Activated T-helper 2 cell treated with anti-CD3 and anti-CD28 coated beads, Interferon-gamma antibody, Interleukin-2, Interleukin-4, amounts not matched to agents 10 μg/mL and 5 μg/mL and 100 μg/mL, durations not matched to agents 14 hours and 24 hours and 36 hours (primary cell): ENCODE measurements at regions of chr13 and their contacts with region 1.

Region 1: DNA sequence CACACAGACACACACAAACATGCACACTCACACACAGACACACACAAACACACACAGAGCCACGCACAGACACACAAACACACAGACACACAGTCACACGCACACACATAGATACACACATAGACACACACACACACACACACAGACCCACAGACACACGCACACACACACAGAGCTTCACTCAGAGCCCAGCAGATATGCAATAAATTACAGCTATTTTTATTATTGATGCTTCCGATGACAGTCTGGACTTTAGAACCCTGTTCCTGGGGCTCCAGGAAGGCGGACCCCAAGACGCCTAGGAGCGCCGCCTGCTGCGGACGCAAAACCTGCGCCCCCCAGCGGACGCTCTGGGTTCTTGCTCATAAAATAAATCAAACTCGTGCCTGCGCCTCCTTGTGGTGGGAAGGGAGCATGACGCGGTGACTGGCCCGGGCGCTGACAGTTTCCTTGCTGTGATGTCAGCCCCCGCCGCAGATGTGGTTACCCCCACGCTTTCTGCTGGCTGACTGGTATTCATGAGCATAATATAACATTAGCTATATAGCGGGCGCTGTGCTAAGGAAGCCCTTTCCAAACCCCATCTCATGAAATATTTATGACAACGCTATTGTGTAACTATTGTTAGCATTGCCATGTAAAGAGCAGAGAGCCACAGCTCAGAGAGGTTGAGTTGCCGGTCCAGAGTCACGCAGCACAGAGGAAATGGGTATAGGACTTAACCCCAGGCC is 64.4 kb upstream of the TM9SF2 start:
- DNase-seq: peak; percentile 91
- H3K4me3 Mint-ChIP-seq: peak overlapping the region; percentile 40
- H3K27ac Mint-ChIP-seq: peak overlapping the region; percentile 56
- H3K4me1 Mint-ChIP-seq: peaks cover 63% of the 10 kb centered on the region
- H3K27me3 Mint-ChIP-seq: peaks cover 24% of the 10 kb centered on the region

Region 2: GRCh38 chr13:98869408-98870090 is 567.3 kb before region 1 on chr13:
- intact Hi-C with region 1: loop called (anchors 10 kb)
- DNase-seq: no peak
- H3K4me3 Mint-ChIP-seq: no peak overlapping the region
- H3K27ac Mint-ChIP-seq: no peak overlapping the region
- H3K4me1 Mint-ChIP-seq: peaks cover 21% of the 10 kb centered on the region
- H3K27me3 Mint-ChIP-seq: no peaks in the 10 kb centered on the region

Region 3: GRCh38 chr13:99165753-99166587 is 270.9 kb before region 1 on chr13:
- intact Hi-C with region 1: no loop called
- DNase-seq: no peak
- H3K4me3 Mint-ChIP-seq: no peak overlapping the region
- H3K27ac Mint-ChIP-seq: no peak overlapping the region
- H3K4me1 Mint-ChIP-seq: no peaks in the 10 kb centered on the region
- H3K27me3 Mint-ChIP-seq: peaks cover 19% of the 10 kb centered on the region

Region 4: GRCh38 chr13:99214232-99214631 is 222.6 kb before region 1 on chr13:
- intact Hi-C with region 1: loop called (anchors 1 kb)
- DNase-seq: no peak
- H3K4me3 Mint-ChIP-seq: peak overlapping the region; percentile 67
- H3K27ac Mint-ChIP-seq: peak overlapping the region; percentile 93
- H3K4me1 Mint-ChIP-seq: peaks cover 61% of the 10 kb centered on the region
- H3K27me3 Mint-ChIP-seq: no peaks in the 10 kb centered on the region

Region 5: GRCh38 chr13:99307648-99308339 is 129.1 kb before region 1 on chr13:
- intact Hi-C with region 1: loop called (anchors 1 kb)
- DNase-seq: peak; percentile 64
- H3K4me3 Mint-ChIP-seq: peak overlapping the region; percentile 98
- H3K27ac Mint-ChIP-seq: peak overlapping the region; percentile 89
- H3K4me1 Mint-ChIP-seq: peaks cover 66% of the 10 kb centered on the region
- H3K27me3 Mint-ChIP-seq: no peaks in the 10 kb centered on the region

Region 6: GRCh38 chr13:99356158-99357091 is 80.4 kb before region 1 on chr13:
- intact Hi-C with region 1: loop called (anchors 1 kb)
- DNase-seq: peak; percentile 74
- H3K4me3 Mint-ChIP-seq: peak overlapping the region; percentile 50
- H3K27ac Mint-ChIP-seq: peak overlapping the region; percentile 98
- H3K4me1 Mint-ChIP-seq: peaks cover 92% of the 10 kb centered on the region
- H3K27me3 Mint-ChIP-seq: no peaks in the 10 kb centered on the region

Region 7: GRCh38 chr13:99417201-99418102 is 19.4 kb before region 1 on chr13:
- intact Hi-C with region 1: loop called (anchors 1 kb)
- DNase-seq: no peak
- H3K4me3 Mint-ChIP-seq: peak overlapping the region; percentile 48
- H3K27ac Mint-ChIP-seq: peak overlapping the region; percentile 74
- H3K4me1 Mint-ChIP-seq: peaks cover 51% of the 10 kb centered on the region
- H3K27me3 Mint-ChIP-seq: no peaks in the 10 kb centered on the region